ENCODE measurements at regions of chr19 and their contacts with region 1.

Region 1: DNA sequence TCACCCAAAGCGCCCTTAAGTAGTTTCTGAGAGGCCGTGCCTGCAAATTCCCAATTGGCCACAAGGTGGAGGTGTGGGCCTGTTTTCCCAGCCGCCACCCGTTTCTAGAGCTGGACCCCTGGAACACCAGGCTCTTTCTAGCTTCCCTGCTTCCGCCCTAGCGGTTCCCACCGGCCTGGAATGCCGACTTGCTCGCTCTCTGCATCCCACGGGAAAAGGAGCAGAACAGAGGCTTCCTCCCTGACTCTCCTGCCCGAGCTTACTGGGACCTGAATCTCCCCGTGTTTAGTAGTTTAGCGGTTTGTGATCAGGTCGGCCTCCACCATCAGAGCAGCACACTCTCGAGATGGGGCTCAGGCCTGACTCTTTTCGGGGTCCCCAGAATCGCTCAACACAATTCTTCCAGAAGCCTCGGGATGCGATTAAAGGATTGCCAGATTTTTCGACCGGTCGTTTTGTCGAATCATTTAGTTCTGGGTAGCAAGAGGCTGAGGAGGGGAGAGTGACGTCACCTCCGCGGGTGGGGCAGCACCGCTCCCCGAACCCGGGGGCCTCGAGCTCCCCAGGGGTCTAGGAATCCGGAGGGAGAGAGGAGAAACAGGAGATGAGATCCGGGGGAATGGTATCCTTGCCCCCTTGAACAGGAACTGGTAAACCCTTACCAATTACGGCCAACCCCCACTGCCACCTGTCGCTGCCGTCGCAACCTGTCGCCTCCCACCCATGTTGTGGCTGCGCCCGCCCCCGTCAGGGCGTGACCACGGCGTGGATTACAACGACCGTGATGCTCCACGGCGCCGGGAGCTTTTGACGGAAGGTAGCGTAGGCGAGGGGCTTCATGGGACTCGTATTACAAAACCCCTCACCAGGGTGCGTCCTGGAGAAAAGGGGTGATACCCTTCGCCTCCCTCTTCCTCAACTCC is 8.0 kb downstream of the NAPSA start:
- DNase-seq: peak; percentile 90
- H3K4me3 Mint-ChIP-seq: peak overlapping the region; percentile 81
- H3K27ac Mint-ChIP-seq: peak overlapping the region; percentile 98
- H3K4me1 Mint-ChIP-seq: peaks cover 53% of the 10 kb centered on the region
- H3K27me3 Mint-ChIP-seq: peaks cover 11% of the 10 kb centered on the region

Region 2: GRCh38 chr19:50368649-50369570 is 11.5 kb after region 1 on chr19:
- CTCF ChIA-PET with region 1: interaction called, 20 read pairs
- DNase-seq: peak; percentile 87
- H3K4me3 Mint-ChIP-seq: peak overlapping the region; percentile 88
- H3K27ac Mint-ChIP-seq: peak overlapping the region; percentile 91
- H3K4me1 Mint-ChIP-seq: peaks cover 42% of the 10 kb centered on the region
- H3K27me3 Mint-ChIP-seq: no peaks in the 10 kb centered on the region

Region 3: GRCh38 chr19:50461066-50461875 is 103.8 kb after region 1 on chr19:
- CTCF ChIA-PET with region 1: interaction called, 28 read pairs
- DNase-seq: peak; percentile 74
- H3K4me3 Mint-ChIP-seq: no peak overlapping the region
- H3K27ac Mint-ChIP-seq: no peak overlapping the region
- H3K4me1 Mint-ChIP-seq: peaks cover 11% of the 10 kb centered on the region
- H3K27me3 Mint-ChIP-seq: peaks cover 62% of the 10 kb centered on the region

Region 4: DNA sequence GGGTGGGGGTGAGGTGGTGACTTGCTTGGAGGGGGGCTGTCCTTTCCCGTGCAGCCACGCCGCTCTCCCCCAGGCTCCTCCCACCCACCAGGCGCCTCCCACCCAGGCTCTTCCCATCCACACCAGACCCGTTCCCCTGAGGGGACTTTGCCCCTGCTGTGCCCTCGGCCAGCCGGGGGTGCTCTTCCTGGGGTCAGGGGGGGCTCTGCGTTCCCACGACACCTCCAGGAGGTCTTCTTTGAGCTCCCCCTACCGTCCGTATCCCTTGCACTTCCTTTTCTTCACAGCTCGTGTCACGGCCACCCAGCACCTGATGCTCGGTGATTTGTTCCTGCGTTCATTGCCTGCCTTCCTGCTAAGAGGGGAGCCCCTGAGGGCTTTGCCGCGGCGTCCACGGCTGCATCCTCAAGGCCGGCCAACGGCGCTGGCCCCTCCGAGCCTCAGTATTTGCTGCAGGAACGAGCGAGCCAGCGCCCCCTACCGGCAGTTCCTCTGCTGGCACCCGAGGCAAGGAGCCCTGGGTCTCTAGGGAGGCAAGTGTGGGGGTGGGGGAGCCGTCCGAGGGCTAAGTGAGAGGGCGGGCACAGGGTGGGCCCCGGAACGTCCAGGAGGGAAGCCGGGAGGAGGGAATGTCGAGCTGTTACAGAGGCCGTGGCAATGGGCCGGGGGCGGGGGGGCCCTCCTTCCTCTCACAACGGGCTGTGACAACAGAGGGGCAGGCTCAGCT is 199.0 kb after region 1 on chr19:
- CTCF ChIA-PET with region 1: interaction called, 12 read pairs
- DNase-seq: peak; percentile 85
- H3K4me3 Mint-ChIP-seq: peak overlapping the region; percentile 80
- H3K27ac Mint-ChIP-seq: no peak overlapping the region
- H3K4me1 Mint-ChIP-seq: peaks cover 10% of the 10 kb centered on the region
- H3K27me3 Mint-ChIP-seq: peaks cover 75% of the 10 kb centered on the region

Measured in activated naive CD4-positive, alpha-beta T cell treated with anti-CD3 and anti-CD28 coated beads, Interleukin-2, amount 10 ng/mL, durations not matched to agents 7 days and 5 days (primary cell).